ENCODE measurements at regions of chr19 and their contacts with region 1.

Region 1: GRCh38 chr19:33795370-33796163 is 1.1 kb upstream of the KCTD15 start:
- DNase-seq: peak; percentile 83 to 95
- H3K4me3 ChIP-seq: peak overlapping the region; percentile 69
- H3K4me3 Mint-ChIP-seq: peak overlapping the region; percentile 80
- H3K27ac Mint-ChIP-seq: peak overlapping the region; percentile 82
- H3K4me1 ChIP-seq: peaks cover 7% of the 10 kb centered on the region
- H3K4me1 Mint-ChIP-seq: no peaks in the 10 kb centered on the region
- H3K27me3 ChIP-seq: no peaks in the 10 kb centered on the region
- H3K27me3 Mint-ChIP-seq: peaks cover 7% of the 10 kb centered on the region
- CTCF ChIP-seq: peak; percentile 78 to 98

Region 2: GRCh38 chr19:33998739-33999345 is 203.3 kb after region 1 on chr19:
- CTCF ChIA-PET with region 1: no interaction called
- POLR2A ChIA-PET with region 1: no interaction called
- intact Hi-C with region 1: loop called (anchors 2 kb)
- DNase-seq: no peak
- H3K4me3 ChIP-seq: no peak overlapping the region
- H3K4me3 Mint-ChIP-seq: no peak overlapping the region
- H3K27ac Mint-ChIP-seq: no peak overlapping the region
- H3K4me1 ChIP-seq: no peaks in the 10 kb centered on the region
- H3K4me1 Mint-ChIP-seq: no peaks in the 10 kb centered on the region
- H3K27me3 ChIP-seq: no peaks in the 10 kb centered on the region
- H3K27me3 Mint-ChIP-seq: peaks cover 12% of the 10 kb centered on the region
- CTCF ChIP-seq: peak; percentile 32 to 58